Common myeloid progenitor, CD34-positive (primary cell): ENCODE measurements at regions of chr12 and their contacts with region 1.

Region 1: GRCh38 chr12:4276524-4277204 is 3.1 kb downstream of the CCND2 start:
- DNase-seq: peak; percentile 92 to 95 (median 94)
- H3K4me3 ChIP-seq: peak overlapping the region in 3 of 7 experiments; percentile 92 to 98 (median 94)
- H3K27ac ChIP-seq: no peak overlapping the region
- H3K4me1 ChIP-seq: peaks cover 6 to 66% (median 48%) of the 10 kb centered on the region in 4 experiments
- H3K27me3 ChIP-seq: no peaks in the 10 kb centered on the region

Region 2: GRCh38 chr12:3964439-3964838 is 312.2 kb before region 1 on chr12:
- CTCF ChIA-PET with region 1: interaction called, 24 read pairs
- POLR2A ChIA-PET with region 1: interaction called, 3 read pairs
- DNase-seq: peak in 1 of 3 donors; percentile 26
- H3K4me3 ChIP-seq: no peak overlapping the region
- H3K27ac ChIP-seq: no peak overlapping the region
- H3K4me1 ChIP-seq: peaks cover 14 to 31% (median 20%) of the 10 kb centered on the region in 4 experiments
- H3K27me3 ChIP-seq: no peaks in the 10 kb centered on the region

Region 3: DNA sequence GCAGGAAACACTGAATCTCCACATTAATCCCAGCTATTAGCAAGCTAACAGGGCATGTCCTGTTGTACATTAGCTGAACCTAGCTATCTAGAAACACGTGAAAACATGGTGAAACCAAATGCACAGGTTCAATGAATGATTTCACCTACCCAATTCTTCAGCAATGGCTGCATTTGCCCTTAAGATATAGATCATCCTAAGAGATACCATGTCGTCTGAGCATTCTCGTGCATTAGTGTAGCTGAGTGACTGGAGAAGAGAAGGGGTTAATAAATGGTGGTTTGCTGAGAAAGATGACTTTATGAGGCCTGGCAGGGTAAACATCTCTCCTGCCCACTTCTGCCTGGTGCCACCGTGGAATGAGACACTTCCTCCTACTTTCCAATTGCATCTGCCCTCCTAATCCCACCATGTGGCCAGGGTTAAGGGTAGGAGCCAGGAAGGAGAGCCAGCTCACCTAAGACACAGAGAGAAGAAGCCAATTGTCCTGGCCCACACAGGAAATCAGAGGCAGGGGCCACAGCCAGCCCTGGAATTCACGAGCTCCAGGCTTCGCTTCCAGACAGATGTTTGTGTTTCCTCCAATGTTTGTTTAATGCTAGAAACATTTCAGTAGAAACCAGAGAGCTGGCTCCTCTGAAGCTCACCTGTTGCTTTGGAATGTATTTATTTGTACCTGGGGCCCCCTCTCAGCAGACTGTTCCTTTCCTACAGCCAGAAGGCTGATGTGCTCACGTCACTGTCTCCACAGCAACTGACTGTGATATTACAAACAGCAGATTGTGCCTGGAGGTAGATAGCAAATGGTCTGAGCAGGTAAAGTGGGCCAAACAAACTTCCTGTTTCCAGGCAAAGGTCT is 277.5 kb before region 1 on chr12:
- CTCF ChIA-PET with region 1: interaction called, 57 read pairs
- POLR2A ChIA-PET with region 1: interaction called, 4 read pairs
- DNase-seq: peak in 2 of 3 donors; percentile 16 to 24
- H3K4me3 ChIP-seq: no peak overlapping the region
- H3K27ac ChIP-seq: no peak overlapping the region
- H3K4me1 ChIP-seq: peaks cover 0 to 13% (median 6%) of the 10 kb centered on the region in 4 experiments
- H3K27me3 ChIP-seq: no peaks in the 10 kb centered on the region

Region 4: DNA sequence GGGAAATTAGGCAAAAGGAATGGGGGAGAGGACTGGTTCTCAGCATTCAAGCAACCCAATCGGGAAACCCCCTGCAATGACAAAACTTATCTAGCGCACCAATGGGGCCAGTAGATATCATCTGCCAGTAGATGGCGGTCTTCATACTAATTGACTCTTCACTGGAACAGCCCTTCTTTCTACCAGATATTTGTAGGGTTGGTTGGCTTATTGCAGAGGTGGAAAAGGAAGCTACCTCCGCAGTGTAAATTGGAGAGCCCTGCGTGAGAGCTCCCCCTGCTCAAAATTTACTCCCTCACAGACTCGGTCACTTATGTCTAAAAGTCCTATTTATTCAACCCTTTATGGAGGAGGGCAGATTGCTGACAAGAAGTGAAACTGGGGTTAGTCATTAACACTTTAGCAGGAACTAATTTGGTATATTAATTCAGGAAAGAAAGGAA is 169.2 kb before region 1 on chr12:
- CTCF ChIA-PET with region 1: interaction called, 98 read pairs
- POLR2A ChIA-PET with region 1: interaction called, 4 read pairs
- DNase-seq: peak; percentile 89 to 96 (median 96)
- H3K4me3 ChIP-seq: peak overlapping the region in 2 of 7 experiments; percentile 11 to 48
- H3K27ac ChIP-seq: no peak overlapping the region
- H3K4me1 ChIP-seq: peaks cover 0 to 5% (median 2%) of the 10 kb centered on the region in 4 experiments
- H3K27me3 ChIP-seq: no peaks in the 10 kb centered on the region

Region 5: GRCh38 chr12:4143896-4144295 is 132.8 kb before region 1 on chr12:
- CTCF ChIA-PET with region 1: interaction called, 10 read pairs
- POLR2A ChIA-PET with region 1: no interaction called
- DNase-seq: peak in 2 of 3 donors; percentile 52 to 56
- H3K4me3 ChIP-seq: peak overlapping the region in 1 of 7 experiments; percentile 10
- H3K27ac ChIP-seq: no peak overlapping the region
- H3K4me1 ChIP-seq: peaks cover 11 to 54% (median 33%) of the 10 kb centered on the region in 4 experiments
- H3K27me3 ChIP-seq: no peaks in the 10 kb centered on the region

Region 6: DNA sequence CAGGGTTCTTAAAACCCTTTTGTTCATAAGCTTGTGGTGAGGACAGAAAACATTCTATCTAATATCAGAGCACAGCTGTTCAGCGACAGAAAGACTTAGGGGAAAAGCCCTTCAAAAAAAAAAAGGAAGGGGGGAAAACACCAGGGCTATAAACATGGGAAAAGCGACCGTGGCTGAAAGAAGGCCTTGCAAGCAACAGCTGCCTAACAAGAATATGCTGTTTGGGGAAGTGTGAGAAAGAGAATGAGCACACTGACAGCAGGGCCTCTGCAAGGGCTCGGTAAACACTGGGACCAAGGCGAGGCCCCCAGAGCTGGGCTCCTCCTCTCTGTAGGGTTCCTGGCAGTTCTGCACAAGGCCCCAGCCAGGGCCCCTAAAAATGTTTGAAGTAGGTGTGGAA is 30.5 kb before region 1 on chr12:
- CTCF ChIA-PET with region 1: interaction called, 7 read pairs
- POLR2A ChIA-PET with region 1: interaction called, 11 read pairs
- DNase-seq: peak in 2 of 3 donors; percentile 66 to 74
- H3K4me3 ChIP-seq: no peak overlapping the region
- H3K27ac ChIP-seq: peak overlapping the region in 1 of 2 experiments; percentile 54
- H3K4me1 ChIP-seq: peaks cover 11 to 67% (median 59%) of the 10 kb centered on the region in 4 experiments
- H3K27me3 ChIP-seq: no peaks in the 10 kb centered on the region